ENCODE measurements at regions of chr3 and their contacts with region 1.

Region 1: GRCh38 chr3:14947886-14948555 is 638 bp downstream of the NR2C2 start:
- DNase-seq: peak; percentile 97
- ATAC-seq: peak; percentile 96 to 99 (median 98)
- H3K4me3 ChIP-seq: peak overlapping the region; percentile 74 to 96 (median 86)
- H3K27ac ChIP-seq: peak overlapping the region; percentile 96 to 100 (median 99)
- H3K4me1 ChIP-seq: peaks cover 11 to 55% (median 35%) of the 10 kb centered on the region in 9 donors
- H3K27me3 ChIP-seq: no peaks in the 10 kb centered on the region
- CTCF ChIP-seq: peak in 2 of 9 donors; percentile 6 to 13

Region 2: GRCh38 chr3:14335774-14336756 is 612.0 kb before region 1 on chr3:
- intact Hi-C with region 1: no loop called
- DNase-seq: no peak
- ATAC-seq: no peak
- H3K4me3 ChIP-seq: no peak overlapping the region
- H3K27ac ChIP-seq: no peak overlapping the region
- H3K4me1 ChIP-seq: peaks cover 0 to under 1% (median 0%) of the 10 kb centered on the region in 9 donors
- H3K27me3 ChIP-seq: peaks cover 0 to 37% (median 27%) of the 10 kb centered on the region in 7 donors
- CTCF ChIP-seq: no peak

Region 3: GRCh38 chr3:14651440-14652251 is 296.4 kb before region 1 on chr3 and contains the start of gene CCDC174:
- intact Hi-C with region 1: loop called in 1 of 10 experiments (anchors 1 kb)
- DNase-seq: peak; percentile 88 to 99
- ATAC-seq: peak; percentile 98 to 99 (median 98)
- H3K4me3 ChIP-seq: peak within 1 kb of the TSS; percentile 42 to 92 (median 76)
- H3K27ac ChIP-seq: peak within 1 kb of the TSS; percentile 64 to 97 (median 84)
- H3K4me1 ChIP-seq: peaks cover 0 to 61% (median 45%) of the 10 kb centered on the region in 9 donors
- H3K27me3 ChIP-seq: no peaks in the 10 kb centered on the region
- CTCF ChIP-seq: peak in 1 of 9 donors; percentile 4
- total RNA-seq, gene CCDC174: 10.0 to 15.4 (median 11.6) TPM

Region 4: DNA sequence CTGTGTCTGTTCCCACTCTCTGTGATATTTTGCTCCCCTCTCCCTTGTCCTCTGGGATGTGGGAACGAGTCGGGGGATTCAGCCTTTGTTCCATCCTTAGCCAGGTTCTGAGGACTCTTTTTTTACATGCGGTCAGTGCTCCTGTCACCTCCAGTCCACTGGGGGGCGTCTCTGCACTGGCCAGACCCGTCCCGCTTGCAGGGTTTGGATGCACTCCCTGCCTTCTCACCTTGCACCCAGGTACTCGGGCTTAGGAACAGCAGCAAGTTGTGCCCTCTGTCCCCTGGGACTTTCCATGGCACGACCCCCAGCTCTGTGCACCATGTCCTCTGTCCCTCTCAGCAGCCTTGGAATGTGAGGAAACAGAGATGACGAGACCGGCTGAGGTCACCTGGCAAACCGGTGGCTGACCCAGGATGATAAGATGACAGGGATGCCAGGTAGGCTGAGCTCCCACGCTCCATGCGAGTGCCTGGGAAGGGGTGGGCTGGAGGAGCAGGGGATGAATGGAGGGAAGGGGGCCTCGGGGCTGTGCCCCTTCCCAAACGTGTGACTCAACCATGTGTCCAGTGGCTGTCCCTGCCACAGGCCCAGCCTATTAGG is 156.6 kb before region 1 on chr3:
- intact Hi-C with region 1: no loop called
- DNase-seq: peak; percentile 66 to 79
- ATAC-seq: peak; percentile 54 to 72 (median 62)
- H3K4me3 ChIP-seq: no peak overlapping the region
- H3K27ac ChIP-seq: peak overlapping the region in 2 of 10 donors; percentile 56 to 65
- H3K4me1 ChIP-seq: peaks cover 14 to 50% (median 35%) of the 10 kb centered on the region in 9 donors
- H3K27me3 ChIP-seq: peaks cover 0 to 26% (median 0%) of the 10 kb centered on the region in 7 donors
- CTCF ChIP-seq: peak; percentile 54 to 83 (median 77)

Region 5: DNA sequence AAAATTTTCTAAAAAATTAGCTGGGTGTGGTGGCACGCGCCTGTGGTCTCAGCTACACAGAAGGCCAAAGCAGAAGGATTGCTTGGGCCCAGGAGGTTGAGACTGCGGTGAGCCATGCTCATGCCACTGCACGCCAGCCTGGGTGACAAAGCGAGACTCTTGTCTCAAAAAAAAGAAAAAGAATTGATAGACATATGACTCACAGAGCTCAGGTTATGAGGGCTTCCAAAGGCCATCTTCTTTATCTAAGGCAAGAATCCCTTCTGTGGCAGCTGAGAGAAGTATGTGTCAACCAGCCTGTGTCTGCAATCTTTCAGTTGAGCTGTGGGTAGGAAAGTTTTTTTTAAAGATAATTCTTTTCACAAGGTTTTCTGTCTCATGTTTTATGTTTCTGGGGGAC is 63.2 kb after region 1 on chr3:
- intact Hi-C with region 1: loop called in 1 of 10 experiments (anchors 10 kb)
- DNase-seq: no peak
- ATAC-seq: peak in 1 of 8 donors; percentile 26
- H3K4me3 ChIP-seq: no peak overlapping the region
- H3K27ac ChIP-seq: no peak overlapping the region
- H3K4me1 ChIP-seq: peaks cover 0 to 31% (median 8%) of the 10 kb centered on the region in 9 donors
- H3K27me3 ChIP-seq: no peaks in the 10 kb centered on the region
- CTCF ChIP-seq: no peak

Region 6: GRCh38 chr3:15042936-15043335 is 94.9 kb after region 1 on chr3:
- intact Hi-C with region 1: loop called in 3 of 10 experiments (anchors 10 kb)
- DNase-seq: no peak
- ATAC-seq: no peak
- H3K4me3 ChIP-seq: no peak overlapping the region
- H3K27ac ChIP-seq: no peak overlapping the region
- H3K4me1 ChIP-seq: peaks cover 0 to 46% (median 24%) of the 10 kb centered on the region in 9 donors
- H3K27me3 ChIP-seq: no peaks in the 10 kb centered on the region
- CTCF ChIP-seq: no peak

Region 7: DNA sequence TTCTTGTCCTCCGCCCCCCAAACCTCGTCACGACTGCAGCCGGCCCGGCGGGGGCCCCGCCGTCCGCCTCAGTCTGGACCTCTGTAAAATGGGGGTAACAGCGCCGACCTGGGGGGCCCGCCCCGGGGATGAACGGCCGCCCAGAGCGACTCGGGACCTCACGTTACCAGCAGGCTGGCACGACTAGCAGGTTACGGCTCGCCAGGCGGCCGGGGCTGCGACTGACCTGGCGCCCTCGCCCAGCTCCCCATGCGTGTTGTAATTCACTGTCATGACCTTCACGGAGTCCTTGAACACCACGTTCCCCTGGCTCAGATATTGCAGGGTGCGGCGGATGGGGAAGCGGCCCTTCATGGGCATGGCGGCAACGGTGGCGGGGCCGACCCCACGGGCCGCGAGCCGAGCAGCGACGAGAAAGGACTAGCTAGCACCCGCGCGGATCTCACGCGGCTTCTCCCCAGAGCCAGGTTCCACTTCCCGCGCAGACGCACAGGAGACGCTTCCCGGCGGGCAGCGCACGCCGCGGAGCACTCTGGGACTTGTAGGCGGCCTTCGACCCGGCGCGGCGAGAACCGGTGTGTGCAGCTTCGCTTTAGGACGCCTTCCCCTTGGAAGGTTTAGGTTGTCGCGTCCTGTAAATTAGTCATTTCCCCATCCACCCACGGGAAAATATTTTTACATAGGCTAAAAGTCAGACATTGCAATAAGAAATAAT is 117.0 kb after region 1 on chr3 and contains the start of gene MRPS25:
- intact Hi-C with region 1: loop called in 3 of 10 experiments (anchors 10 kb)
- DNase-seq: peak; percentile 89 to 90
- ATAC-seq: peak; percentile 96 to 98 (median 98)
- H3K4me3 ChIP-seq: peak within 1 kb of the TSS; percentile 70 to 97 (median 82)
- H3K27ac ChIP-seq: peak within 1 kb of the TSS; percentile 69 to 91 (median 88)
- H3K4me1 ChIP-seq: peaks cover 6 to 24% (median 17%) of the 10 kb centered on the region in 9 donors
- H3K27me3 ChIP-seq: no peaks in the 10 kb centered on the region
- CTCF ChIP-seq: no peak
- total RNA-seq, gene MRPS25: 64.7 to 190 (median 92.8) TPM

Region 8: DNA sequence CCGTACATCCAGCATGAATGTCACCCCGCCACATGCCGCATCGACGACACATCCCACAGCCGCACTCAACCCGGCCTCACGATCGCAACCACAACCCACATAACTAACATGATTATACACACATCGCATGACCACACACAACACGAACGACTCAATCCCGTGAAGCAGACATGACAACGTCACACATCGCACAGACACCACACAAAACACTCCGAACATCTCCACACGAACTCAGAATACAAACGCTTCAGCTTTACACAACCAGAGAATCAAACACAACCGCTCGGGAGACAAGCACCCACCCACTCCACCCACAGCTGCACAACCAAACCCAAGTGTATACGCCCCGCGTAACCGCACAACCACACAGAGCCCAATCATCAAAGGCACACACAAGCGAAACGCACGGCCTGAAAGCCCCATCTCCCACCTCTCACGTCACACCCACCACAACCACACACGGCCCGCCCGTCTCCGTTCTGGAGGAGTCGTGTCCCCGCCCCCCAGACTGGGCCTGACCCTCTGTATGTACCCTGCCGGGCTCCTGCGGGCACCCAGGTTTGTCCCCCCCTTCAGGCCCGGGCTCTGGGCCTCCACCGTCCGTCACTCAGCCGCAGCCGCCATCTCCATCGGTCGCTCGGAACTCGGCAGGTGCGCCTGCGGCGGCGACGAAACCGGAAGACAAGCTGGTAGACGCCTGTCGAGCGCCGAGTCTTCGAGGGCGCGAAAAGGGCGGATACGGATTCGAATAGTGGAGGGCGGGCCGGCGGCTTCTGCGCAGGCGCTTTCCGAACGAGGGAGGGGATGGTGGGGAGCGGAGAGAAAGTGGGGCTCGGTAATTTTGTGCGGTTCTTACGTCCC is 150.7 kb after region 1 on chr3 and contains the start of gene RBSN:
- intact Hi-C with region 1: loop called in 1 of 10 experiments (anchors 5 kb)
- DNase-seq: peak; percentile 95 to 96
- ATAC-seq: peak; percentile 77 to 91 (median 84)
- H3K4me3 ChIP-seq: peak within 1 kb of the TSS; percentile 68 to 97 (median 86)
- H3K27ac ChIP-seq: peak within 1 kb of the TSS; percentile 18 to 93 (median 86)
- H3K4me1 ChIP-seq: peaks cover 3 to 51% (median 37%) of the 10 kb centered on the region in 9 donors
- H3K27me3 ChIP-seq: no peaks in the 10 kb centered on the region
- CTCF ChIP-seq: no peak
- total RNA-seq, gene RBSN: 17.4 to 23.8 (median 21.2) TPM

Measured in heart right ventricle (tissue), 16 donors.